Activated naive CD8-positive, alpha-beta T cell treated with anti-CD3 and anti-CD28 coated beads, Interleukin-2, amount 10 ng/mL, durations not matched to agents 7 days and 5 days (primary cell): ENCODE measurements at regions of chr15 and their contacts with region 1.

Region 1: GRCh38 chr15:31391687-31392671 is 65.3 kb downstream of the KLF13 start:
- DNase-seq: peak; percentile 93
- ATAC-seq: peak; percentile 80
- H3K4me3 Mint-ChIP-seq: peak overlapping the region; percentile 93
- H3K27ac Mint-ChIP-seq: peak overlapping the region; percentile 92
- H3K4me1 Mint-ChIP-seq: peaks cover 37% of the 10 kb centered on the region
- H3K27me3 Mint-ChIP-seq: no peaks in the 10 kb centered on the region

Region 2: DNA sequence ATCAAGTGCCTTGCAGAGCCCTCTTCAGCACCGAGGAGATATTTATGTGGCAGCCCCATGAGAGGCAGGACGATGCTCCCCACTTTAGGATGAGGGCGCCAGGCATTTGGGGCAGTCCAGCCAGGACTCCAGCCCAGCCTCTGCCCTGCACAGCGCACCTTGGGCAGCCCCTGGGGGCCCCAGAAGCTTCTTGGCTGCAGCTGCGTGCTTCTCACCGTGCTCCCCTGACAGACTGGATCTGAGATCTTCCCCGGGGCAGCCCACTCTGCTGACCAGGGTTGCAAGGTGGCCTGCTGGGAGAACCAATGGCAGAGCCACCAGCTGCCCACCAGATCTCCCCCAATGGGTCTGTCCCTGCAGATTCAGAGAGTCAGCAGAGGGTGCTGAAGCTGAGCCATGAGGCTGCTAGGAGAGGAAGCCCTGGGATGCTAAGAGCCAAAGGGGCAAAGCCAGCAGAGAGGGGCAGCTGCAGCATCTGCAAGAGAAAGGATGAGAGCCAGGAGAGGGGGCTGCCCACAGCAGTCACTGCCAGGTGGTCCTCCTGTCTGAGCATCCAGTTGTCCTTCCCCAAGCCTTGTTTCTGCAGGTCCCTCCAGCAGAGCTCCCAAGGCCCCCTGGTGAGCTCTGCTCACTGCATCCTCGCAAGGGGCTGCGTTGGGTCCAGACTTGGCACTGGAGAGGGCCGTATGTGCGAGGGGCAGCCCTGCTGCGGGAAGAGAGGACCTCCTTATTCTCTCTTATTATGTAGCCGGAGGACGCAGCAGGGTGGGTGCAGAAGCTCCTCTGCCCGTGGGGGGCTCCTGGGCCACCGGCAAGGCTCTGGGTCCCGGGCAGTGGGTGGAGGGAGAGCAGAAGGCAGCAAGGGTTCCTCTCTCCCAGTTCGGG is 80.0 kb before region 1 on chr15:
- POLR2A ChIA-PET with region 1: no interaction called
- DNase-seq: no peak
- ATAC-seq: no peak
- H3K4me3 Mint-ChIP-seq: no peak overlapping the region
- H3K27ac Mint-ChIP-seq: no peak overlapping the region
- H3K4me1 Mint-ChIP-seq: peaks cover 30% of the 10 kb centered on the region
- H3K27me3 Mint-ChIP-seq: peaks cover 18% of the 10 kb centered on the region

Region 3: GRCh38 chr15:31344823-31345605 is 47.0 kb before region 1 on chr15:
- POLR2A ChIA-PET with region 1: interaction called, 14 read pairs
- DNase-seq: peak; percentile 65
- ATAC-seq: peak; percentile 32
- H3K4me3 Mint-ChIP-seq: peak overlapping the region; percentile 95
- H3K27ac Mint-ChIP-seq: peak overlapping the region; percentile 100
- H3K4me1 Mint-ChIP-seq: peaks cover 85% of the 10 kb centered on the region
- H3K27me3 Mint-ChIP-seq: no peaks in the 10 kb centered on the region

Region 4: GRCh38 chr15:31352911-31353811 is 38.8 kb before region 1 on chr15:
- POLR2A ChIA-PET with region 1: interaction called, 14 read pairs
- DNase-seq: peak; percentile 61
- ATAC-seq: peak; percentile 42
- H3K4me3 Mint-ChIP-seq: peak overlapping the region; percentile 80
- H3K27ac Mint-ChIP-seq: peak overlapping the region; percentile 100
- H3K4me1 Mint-ChIP-seq: peaks cover 83% of the 10 kb centered on the region
- H3K27me3 Mint-ChIP-seq: no peaks in the 10 kb centered on the region

Region 5: DNA sequence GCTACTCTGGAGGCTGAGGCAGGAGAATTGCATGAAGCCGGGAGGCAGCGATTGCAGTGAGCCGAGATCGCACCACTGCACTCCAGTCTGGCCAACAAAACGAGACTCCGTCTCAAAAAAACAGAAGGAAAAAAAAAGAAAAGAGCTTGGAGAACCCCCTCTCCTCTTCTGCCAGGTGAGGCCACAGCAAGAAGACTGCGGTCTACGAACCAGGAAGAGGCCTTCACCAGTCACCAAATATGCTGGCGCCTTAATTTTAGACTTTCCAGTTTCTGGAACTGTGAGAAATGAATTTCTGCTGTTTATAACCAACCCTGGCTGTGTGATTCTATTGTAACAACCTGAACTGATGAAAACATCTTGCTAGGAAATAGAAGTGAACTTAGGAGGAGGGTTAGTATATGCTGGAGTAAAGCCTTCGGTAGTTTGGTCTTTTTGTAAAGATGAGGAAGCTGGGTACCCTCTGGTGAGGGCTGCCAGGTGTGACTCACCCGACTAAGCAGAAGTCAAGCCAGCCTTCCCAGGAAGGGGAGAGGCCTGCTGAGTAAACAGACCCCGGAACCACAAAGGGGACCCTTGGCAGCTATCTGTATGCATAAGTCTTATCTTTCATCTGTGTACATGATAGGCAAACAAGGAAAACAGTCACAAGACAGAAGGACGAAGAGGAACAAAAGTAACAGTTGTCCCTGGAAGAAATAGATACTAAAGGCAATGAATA is 13.4 kb after region 1 on chr15:
- POLR2A ChIA-PET with region 1: interaction called, 12 read pairs
- DNase-seq: no peak
- ATAC-seq: peak; percentile 70
- H3K4me3 Mint-ChIP-seq: peak overlapping the region; percentile 64
- H3K27ac Mint-ChIP-seq: peak overlapping the region; percentile 90
- H3K4me1 Mint-ChIP-seq: peaks cover 23% of the 10 kb centered on the region
- H3K27me3 Mint-ChIP-seq: peaks cover 1% of the 10 kb centered on the region

Region 6: GRCh38 chr15:31419820-31420219 is 27.8 kb after region 1 on chr15:
- POLR2A ChIA-PET with region 1: no interaction called
- DNase-seq: no peak
- ATAC-seq: no peak
- H3K4me3 Mint-ChIP-seq: no peak overlapping the region
- H3K27ac Mint-ChIP-seq: no peak overlapping the region
- H3K4me1 Mint-ChIP-seq: no peaks in the 10 kb centered on the region
- H3K27me3 Mint-ChIP-seq: no peaks in the 10 kb centered on the region